Adrenal gland (tissue), 19 donors: ENCODE measurements at regions of chr6 and their contacts with region 1.

Region 1: DNA sequence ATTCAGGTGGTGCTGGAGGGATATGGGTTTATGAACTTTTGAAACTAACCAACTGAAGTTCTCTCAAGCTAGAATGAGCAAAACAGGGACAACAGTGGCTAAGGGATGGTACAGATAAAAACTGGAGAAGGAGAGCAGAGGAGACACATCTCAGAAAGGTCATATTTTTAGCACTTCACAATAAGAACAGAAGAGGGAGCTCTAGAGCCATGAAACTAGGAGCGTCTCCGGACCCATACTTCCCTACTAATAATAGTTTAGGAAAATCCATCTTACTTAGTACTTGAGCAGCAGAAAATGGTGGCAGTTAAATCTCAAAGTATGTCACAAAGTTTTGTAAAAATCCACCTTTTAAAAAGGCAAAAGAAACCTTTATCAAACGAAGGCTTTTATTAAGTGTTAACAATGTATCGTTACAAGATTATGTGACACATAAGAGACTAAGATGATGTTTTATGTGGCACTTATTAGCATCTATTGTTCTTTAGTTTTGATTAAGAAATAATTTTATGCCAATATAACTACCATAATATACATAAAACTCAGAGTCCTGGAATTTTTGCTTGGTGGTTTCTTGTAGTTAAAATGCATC is 278.6 kb downstream of the TBC1D32 start:
- DNase-seq: no peak
- H3K4me3 ChIP-seq: no peak overlapping the region
- H3K27ac ChIP-seq: no peak overlapping the region
- H3K4me1 ChIP-seq: no peaks in the 10 kb centered on the region
- H3K27me3 ChIP-seq: no peaks in the 10 kb centered on the region
- CTCF ChIP-seq: peak; percentile 42 to 72 (median 68)
- POLR2A ChIP-seq: no peak

Region 2: DNA sequence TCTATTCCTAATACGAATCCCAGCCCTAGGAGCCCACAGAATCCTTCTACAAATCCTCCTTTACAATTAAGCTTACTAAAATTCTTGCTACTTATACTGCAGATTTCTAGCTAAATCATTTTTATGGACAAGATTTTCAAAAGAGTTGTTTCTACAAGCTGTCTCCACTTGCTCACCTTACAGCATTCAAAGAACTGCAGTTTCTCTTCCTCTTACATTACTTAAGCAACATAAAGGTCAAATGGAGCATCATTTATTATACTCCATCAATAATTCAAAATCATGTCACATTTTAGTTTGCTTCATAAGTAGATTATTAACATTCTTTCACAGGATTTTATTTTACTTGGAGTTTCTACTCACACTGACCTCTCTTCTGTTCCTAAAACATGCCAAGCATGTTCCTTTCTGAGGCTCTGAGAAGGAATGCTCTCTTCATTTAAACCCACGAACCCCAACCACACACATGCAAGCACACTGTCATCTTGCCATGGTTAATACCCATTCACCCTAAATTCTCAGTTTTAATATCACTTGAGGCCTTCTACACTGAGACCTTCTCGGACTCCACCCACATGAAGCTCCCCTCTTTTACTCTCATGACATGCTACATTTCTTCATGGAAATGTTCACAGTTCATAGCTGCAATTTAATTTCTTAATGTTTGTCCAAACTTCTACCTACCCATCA is 109.6 kb before region 1 on chr6:
- intact Hi-C with region 1: no loop called
- DNase-seq: no peak
- H3K4me3 ChIP-seq: no peak overlapping the region
- H3K27ac ChIP-seq: no peak overlapping the region
- H3K4me1 ChIP-seq: no peaks in the 10 kb centered on the region
- H3K27me3 ChIP-seq: no peaks in the 10 kb centered on the region
- CTCF ChIP-seq: no peak
- POLR2A ChIP-seq: no peak

Region 3: DNA sequence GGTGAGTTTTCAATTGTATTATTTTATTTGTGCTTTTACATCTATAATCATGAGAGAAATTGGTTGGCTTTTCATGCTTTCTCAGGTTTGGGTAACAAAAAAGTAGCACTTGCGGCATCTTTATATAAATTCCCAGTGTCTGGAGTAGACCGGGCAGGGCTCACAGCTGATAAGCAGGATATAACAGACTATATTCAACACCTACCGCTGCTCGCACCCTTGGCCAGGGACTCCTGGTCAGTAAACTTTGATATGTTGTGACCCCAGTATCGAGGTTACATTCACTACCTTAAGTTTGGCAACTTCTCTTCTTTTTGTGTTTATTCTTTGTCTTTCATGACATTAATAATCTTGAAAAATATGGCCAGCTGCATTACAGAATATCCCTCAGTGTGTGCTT is 64.8 kb before region 1 on chr6:
- intact Hi-C with region 1: no loop called
- DNase-seq: no peak
- H3K4me3 ChIP-seq: no peak overlapping the region
- H3K27ac ChIP-seq: no peak overlapping the region
- H3K4me1 ChIP-seq: no peaks in the 10 kb centered on the region
- H3K27me3 ChIP-seq: no peaks in the 10 kb centered on the region
- CTCF ChIP-seq: no peak
- POLR2A ChIP-seq: no peak

Region 4: GRCh38 chr6:121305957-121306607 is 250.4 kb after region 1 on chr6:
- intact Hi-C with region 1: loop called in 1 of 2 experiments (anchors 10 kb)
- DNase-seq: no peak
- H3K4me3 ChIP-seq: no peak overlapping the region
- H3K27ac ChIP-seq: no peak overlapping the region
- H3K4me1 ChIP-seq: no peaks in the 10 kb centered on the region
- H3K27me3 ChIP-seq: no peaks in the 10 kb centered on the region
- CTCF ChIP-seq: peak; percentile 40 to 56 (median 50)
- POLR2A ChIP-seq: no peak

Region 5: GRCh38 chr6:121399966-121400365 is 344.3 kb after region 1 on chr6:
- intact Hi-C with region 1: loop called (anchors 10 kb)
- DNase-seq: no peak
- H3K4me3 ChIP-seq: no peak overlapping the region
- H3K27ac ChIP-seq: no peak overlapping the region
- H3K4me1 ChIP-seq: peaks cover 0 to 15% of the 10 kb centered on the region in 2 donors
- H3K27me3 ChIP-seq: no peaks in the 10 kb centered on the region
- CTCF ChIP-seq: no peak
- POLR2A ChIP-seq: no peak